Caco-2 (cell line): ENCODE measurements at regions of chr6 and their contacts with region 1.

Region 1: DNA sequence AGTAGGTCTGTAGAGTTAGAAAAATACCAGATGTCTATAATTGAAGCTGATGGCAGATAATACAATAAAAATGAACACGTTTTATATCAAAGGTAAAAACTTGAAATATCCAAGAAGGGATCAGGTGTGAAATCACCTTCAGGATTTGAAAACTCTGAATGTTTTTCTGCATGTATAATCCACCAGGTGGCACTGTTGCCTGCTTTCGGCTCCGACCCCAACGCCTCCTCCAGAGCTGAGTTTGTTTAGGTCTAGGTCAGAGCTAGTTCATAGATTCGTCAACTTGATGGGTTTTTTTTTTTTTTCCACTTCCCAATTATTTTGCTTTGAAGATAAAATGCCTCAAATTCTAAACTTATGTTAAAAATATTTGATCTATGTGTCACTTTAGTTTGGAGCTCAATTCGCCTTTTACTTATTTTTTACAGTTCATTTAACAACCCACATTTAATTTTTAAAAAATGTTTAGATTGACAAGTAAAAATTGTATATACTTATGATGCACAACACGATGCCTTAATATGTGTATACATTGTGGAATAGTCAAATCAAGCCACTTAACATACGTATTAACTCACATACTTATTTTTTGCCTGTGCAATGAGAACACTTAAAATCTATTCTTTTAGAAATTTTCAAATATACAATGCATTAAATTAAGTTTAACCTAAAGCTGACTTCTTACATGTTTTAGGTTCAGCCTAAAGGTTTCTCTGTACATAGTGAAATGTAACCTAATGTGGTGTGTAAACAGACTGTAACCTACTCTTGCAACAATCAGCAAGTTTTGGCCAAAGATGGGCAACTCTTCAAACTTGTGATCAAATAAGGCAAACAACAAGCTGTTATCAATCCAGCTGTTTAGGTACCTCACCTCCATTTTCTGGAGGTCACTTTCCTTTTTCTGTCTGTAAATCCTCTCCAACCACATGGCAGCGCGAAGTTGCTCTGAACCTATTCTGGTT is 39.4 kb upstream of the ENPP4 start:
- DNase-seq: peak; percentile 46 to 60
- H3K4me3 ChIP-seq: no peak overlapping the region
- H3K4me3 Mint-ChIP-seq: no peak overlapping the region
- H3K27ac Mint-ChIP-seq: no peak overlapping the region
- H3K4me1 ChIP-seq: no peaks in the 10 kb centered on the region
- H3K4me1 Mint-ChIP-seq: no peaks in the 10 kb centered on the region
- H3K27me3 ChIP-seq: no peaks in the 10 kb centered on the region
- H3K27me3 Mint-ChIP-seq: peaks cover 4% of the 10 kb centered on the region
- CTCF ChIP-seq: peak; percentile 74 to 76

Region 2: GRCh38 chr6:45930420-45931040 is 159.9 kb before region 1 on chr6:
- CTCF ChIA-PET with region 1: interaction called, 5 read pairs
- POLR2A ChIA-PET with region 1: no interaction called
- intact Hi-C with region 1: loop called (anchors 2 kb)
- DNase-seq: peak; percentile 69 to 75
- H3K4me3 ChIP-seq: no peak overlapping the region
- H3K4me3 Mint-ChIP-seq: no peak overlapping the region
- H3K27ac Mint-ChIP-seq: no peak overlapping the region
- H3K4me1 ChIP-seq: 0 out of 2 replicates have a peak, but pooled peaks cover 4% of the 10 kb centered on the region
- H3K4me1 Mint-ChIP-seq: no peaks in the 10 kb centered on the region
- H3K27me3 ChIP-seq: no peaks in the 10 kb centered on the region
- H3K27me3 Mint-ChIP-seq: no peaks in the 10 kb centered on the region
- CTCF ChIP-seq: peak; percentile 92 to 93

Region 3: GRCh38 chr6:46221222-46221793 is 130.9 kb after region 1 on chr6:
- CTCF ChIA-PET with region 1: no interaction called
- POLR2A ChIA-PET with region 1: no interaction called
- intact Hi-C with region 1: loop called (anchors 5 kb)
- DNase-seq: peak in 1 of 2 experiments; percentile 25
- H3K4me3 ChIP-seq: no peak overlapping the region
- H3K4me3 Mint-ChIP-seq: no peak overlapping the region
- H3K27ac Mint-ChIP-seq: no peak overlapping the region
- H3K4me1 ChIP-seq: no peaks in the 10 kb centered on the region
- H3K4me1 Mint-ChIP-seq: no peaks in the 10 kb centered on the region
- H3K27me3 ChIP-seq: no peaks in the 10 kb centered on the region
- H3K27me3 Mint-ChIP-seq: peaks cover 10% of the 10 kb centered on the region
- CTCF ChIP-seq: peak; percentile 61 to 82

Region 4: GRCh38 chr6:46491628-46492547 is 401.5 kb after region 1 on chr6:
- CTCF ChIA-PET with region 1: no interaction called
- POLR2A ChIA-PET with region 1: no interaction called
- intact Hi-C with region 1: loop called (anchors 10 kb)
- DNase-seq: peak in 1 of 2 experiments; percentile 23
- H3K4me3 ChIP-seq: peak overlapping the region; percentile 44
- H3K4me3 Mint-ChIP-seq: peak overlapping the region; percentile 73
- H3K27ac Mint-ChIP-seq: no peak overlapping the region
- H3K4me1 ChIP-seq: peaks cover 9% of the 10 kb centered on the region; the same call in 1 of the 2 replicates
- H3K4me1 Mint-ChIP-seq: peaks cover 7% of the 10 kb centered on the region
- H3K27me3 ChIP-seq: no peaks in the 10 kb centered on the region; the same call in none of the 2 replicates
- H3K27me3 Mint-ChIP-seq: peaks cover 33% of the 10 kb centered on the region
- CTCF ChIP-seq: peak; percentile 16 to 67

Region 5: DNA sequence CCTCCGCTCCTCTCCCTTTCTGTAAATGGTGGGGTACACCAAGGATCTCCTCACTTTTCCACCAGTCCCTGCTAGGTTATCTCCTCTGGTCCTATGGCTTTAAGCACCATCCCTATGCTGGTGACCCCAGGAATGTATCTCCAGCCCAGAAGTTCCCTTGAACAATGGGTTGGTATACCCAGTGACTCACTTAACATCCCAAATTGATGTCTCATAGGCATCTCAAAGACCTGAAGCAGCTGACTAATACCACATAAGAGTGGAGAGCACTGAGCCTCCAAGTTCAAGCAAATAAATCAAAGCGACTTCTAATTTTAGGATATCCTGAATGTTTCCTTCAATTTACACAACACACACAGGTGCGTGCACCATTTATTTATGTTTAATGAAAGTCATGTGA is 903.4 kb after region 1 on chr6:
- CTCF ChIA-PET with region 1: no interaction called
- POLR2A ChIA-PET with region 1: no interaction called
- intact Hi-C with region 1: loop called (anchors 10 kb)
- DNase-seq: no peak
- H3K4me3 ChIP-seq: no peak overlapping the region
- H3K4me3 Mint-ChIP-seq: no peak overlapping the region
- H3K27ac Mint-ChIP-seq: no peak overlapping the region
- H3K4me1 ChIP-seq: peaks cover 32% of the 10 kb centered on the region
- H3K4me1 Mint-ChIP-seq: peaks cover 25% of the 10 kb centered on the region
- H3K27me3 ChIP-seq: no peaks in the 10 kb centered on the region
- H3K27me3 Mint-ChIP-seq: no peaks in the 10 kb centered on the region
- CTCF ChIP-seq: no peak